ENCODE measurements at regions of chr22 and their contacts with region 1.

Region 1: GRCh38 chr22:25465949-25466348 is 98.5 kb upstream of the GRK3 start:
- DNase-seq: no peak
- H3K4me3 ChIP-seq: no peak overlapping the region
- H3K27ac ChIP-seq: no peak overlapping the region
- H3K4me1 ChIP-seq: no peaks in the 10 kb centered on the region
- H3K27me3 ChIP-seq: no peaks in the 10 kb centered on the region
- CTCF ChIP-seq: no peak
- EP300 ChIP-seq: no peak
- POLR2A ChIP-seq: no peak

Region 2: GRCh38 chr22:25013607-25014006 is 452.3 kb before region 1 on chr22:
- intact Hi-C with region 1: no loop called
- DNase-seq: no peak
- H3K4me3 ChIP-seq: no peak overlapping the region
- H3K27ac ChIP-seq: peak overlapping the region in 1 of 4 donors; percentile 25
- H3K4me1 ChIP-seq: peaks cover 0 to 28% (median 15%) of the 10 kb centered on the region in 4 donors
- H3K27me3 ChIP-seq: no peaks in the 10 kb centered on the region
- CTCF ChIP-seq: no peak
- EP300 ChIP-seq: no peak
- POLR2A ChIP-seq: no peak

Region 3: DNA sequence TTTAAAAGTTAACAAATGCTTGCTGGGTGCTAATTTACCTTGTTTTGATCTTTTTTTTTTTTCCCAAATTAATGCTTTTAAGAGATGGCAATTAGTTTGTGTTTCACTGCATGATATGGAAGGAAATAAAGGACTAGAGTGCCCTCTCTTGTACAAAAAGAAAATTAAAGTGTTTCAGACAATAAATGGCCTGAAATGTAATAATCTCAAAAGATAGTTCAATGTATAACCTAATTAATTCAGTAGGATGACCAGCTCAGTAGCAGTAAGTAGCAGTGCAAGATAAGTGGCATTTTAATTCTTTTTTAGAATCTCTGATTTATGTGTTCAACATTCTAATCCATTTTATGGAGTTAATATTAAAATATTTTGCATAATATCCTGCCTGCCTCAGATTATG is 236.1 kb after region 1 on chr22:
- intact Hi-C with region 1: loop called (anchors 5 kb)
- DNase-seq: no peak
- H3K4me3 ChIP-seq: no peak overlapping the region
- H3K27ac ChIP-seq: no peak overlapping the region
- H3K4me1 ChIP-seq: peaks cover 10 to 16% (median 14%) of the 10 kb centered on the region in 4 donors
- H3K27me3 ChIP-seq: no peaks in the 10 kb centered on the region
- CTCF ChIP-seq: peak; percentile 48 to 59 (median 48)
- EP300 ChIP-seq: no peak
- POLR2A ChIP-seq: no peak

Region 4: GRCh38 chr22:25777870-25778269 is 311.9 kb after region 1 on chr22:
- intact Hi-C with region 1: loop called (anchors 1 kb)
- DNase-seq: no peak
- H3K4me3 ChIP-seq: no peak overlapping the region
- H3K27ac ChIP-seq: no peak overlapping the region
- H3K4me1 ChIP-seq: no peaks in the 10 kb centered on the region
- H3K27me3 ChIP-seq: peaks cover 0 to 28% (median 0%) of the 10 kb centered on the region in 4 donors
- CTCF ChIP-seq: no peak
- EP300 ChIP-seq: no peak
- POLR2A ChIP-seq: no peak